ENCODE measurements at regions of chr5 and their contacts with region 1.

Region 1: DNA sequence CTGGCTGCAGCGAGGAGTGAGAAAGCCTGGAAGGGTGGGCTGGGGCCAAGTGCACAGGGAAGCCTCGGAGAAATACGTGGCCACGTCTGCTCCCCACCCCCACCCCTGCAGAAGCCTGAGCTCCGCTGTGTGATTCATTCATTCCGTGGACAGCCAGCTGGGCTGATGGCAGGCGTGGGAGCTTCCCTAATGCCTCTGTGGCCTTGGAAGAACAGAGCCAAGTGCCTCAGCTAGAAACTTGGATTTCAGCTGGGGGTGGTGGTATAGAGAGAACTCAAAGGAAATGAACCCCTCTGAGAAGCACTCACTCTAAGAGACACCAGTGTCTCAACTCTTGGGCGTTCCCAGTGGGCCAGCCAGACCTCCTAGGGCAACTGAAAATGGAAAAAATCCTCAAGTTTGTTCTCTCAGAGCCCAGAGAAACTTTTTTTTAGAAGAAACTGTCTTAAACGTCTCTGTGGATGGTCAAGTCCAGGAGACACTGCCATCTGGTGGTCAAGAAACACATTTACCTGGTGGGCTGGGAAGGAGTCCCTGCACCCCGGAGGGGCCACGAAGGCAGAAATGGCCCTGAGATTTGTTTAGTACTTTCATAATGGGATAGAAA is 18.0 kb downstream of the ATOX1 start:
- DNase-seq: peak; percentile 34 to 37
- ATAC-seq: peak; percentile 66

Region 2: DNA sequence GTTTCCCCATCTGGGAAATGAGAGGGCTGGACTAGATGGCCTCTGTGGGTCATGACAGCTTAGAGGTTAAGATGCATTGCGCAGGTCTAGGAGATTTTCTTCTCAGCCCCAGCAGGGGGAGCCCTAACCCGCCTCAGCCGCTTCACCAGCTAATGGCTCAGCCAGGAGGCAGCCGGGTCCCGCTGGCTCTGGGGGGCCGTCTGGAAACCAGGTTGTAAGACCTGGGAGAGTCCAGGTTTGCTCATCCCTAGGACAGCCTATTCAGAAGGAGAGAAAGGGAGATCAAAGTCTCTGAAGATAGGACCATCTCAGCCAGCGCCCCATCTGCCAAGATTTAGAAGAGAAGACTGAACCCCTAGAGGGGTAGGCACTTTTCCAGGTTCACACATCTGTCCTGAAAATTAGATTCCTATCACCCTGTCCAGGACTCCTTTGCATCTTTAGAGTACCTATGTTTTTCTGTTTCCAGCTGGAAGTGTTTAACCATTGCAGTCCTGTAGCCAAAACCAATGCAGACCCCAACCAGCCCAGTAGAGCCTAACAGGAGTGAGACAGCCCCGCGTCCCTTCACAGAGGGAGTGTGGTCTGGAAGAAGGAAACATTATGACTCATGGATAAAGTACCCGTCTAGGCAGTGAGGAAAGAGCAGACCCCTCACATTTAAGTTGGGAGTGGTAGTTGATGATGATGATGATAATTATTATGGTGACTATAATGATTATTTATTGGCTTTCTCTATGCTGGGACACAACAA is 81.3 kb before region 1 on chr5:
- intact Hi-C with region 1: loop called (anchors 1 to 10 kb)
- DNase-seq: peak; percentile 50 to 64
- ATAC-seq: peak; percentile 93

Measured in left colon (tissue), 2 donors.